Activated CD8-positive, alpha-beta T cell treated with anti-CD3 and anti-CD28 coated beads for 36 hours (primary cell): ENCODE measurements at regions of chr21 and their contacts with region 1.

Region 1: GRCh38 chr21:33894736-33895288 is 20.8 kb downstream of the ATP5PO start:
- DNase-seq: peak; percentile 88
- ATAC-seq: peak; percentile 99
- H3K4me3 Mint-ChIP-seq: peak overlapping the region; percentile 51
- H3K27ac Mint-ChIP-seq: peak overlapping the region; percentile 70
- H3K4me1 Mint-ChIP-seq: peaks cover 12% of the 10 kb centered on the region
- H3K27me3 Mint-ChIP-seq: no peaks in the 10 kb centered on the region
- CTCF ChIP-seq: peak; percentile 79

Region 2: DNA sequence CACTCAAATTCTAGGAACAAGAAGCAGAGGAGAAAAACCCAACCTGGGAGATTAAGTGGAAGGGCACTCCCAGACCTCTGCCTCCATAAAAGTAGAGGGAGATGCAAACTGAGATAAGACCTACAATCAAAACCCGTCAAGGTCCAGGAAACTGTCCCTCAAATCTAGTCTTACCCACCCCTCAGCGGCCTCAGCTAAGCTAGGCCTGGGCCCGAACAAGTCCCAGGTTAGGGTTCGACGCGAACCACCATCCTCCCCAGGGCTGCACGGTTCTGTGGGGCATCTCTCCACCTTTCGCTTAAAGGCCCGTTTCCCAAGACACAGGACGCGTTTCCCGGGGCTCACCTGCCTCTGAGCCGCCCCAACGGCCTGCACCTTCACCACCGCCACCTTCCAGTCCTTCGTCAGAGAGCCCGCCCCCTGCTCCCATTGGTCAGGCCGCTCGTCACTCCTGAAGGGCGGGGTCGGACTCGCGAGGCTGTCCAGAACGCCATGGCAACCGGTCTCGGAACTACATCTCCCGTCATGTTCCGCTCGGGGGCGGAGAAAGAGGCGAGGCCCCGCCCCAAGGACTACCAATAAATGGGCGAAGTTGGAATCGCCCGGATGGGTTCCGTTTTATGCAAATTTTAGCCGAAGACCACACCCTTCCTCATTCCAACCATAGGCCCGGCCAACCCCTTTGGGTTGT is 253.3 kb before region 1 on chr21 and contains the start of gene CRYZL1:
- CTCF ChIA-PET with region 1: no interaction called
- POLR2A ChIA-PET with region 1: no interaction called
- intact Hi-C with region 1: loop called (anchors 10 kb)
- DNase-seq: peak; percentile 100
- ATAC-seq: peak; percentile 85
- H3K4me3 Mint-ChIP-seq: peak within 1 kb of the TSS; percentile 81
- H3K27ac Mint-ChIP-seq: peak within 1 kb of the TSS; percentile 94
- H3K4me1 Mint-ChIP-seq: peaks cover 24% of the 10 kb centered on the region
- H3K27me3 Mint-ChIP-seq: peaks cover 17% of the 10 kb centered on the region
- CTCF ChIP-seq: no peak
- total RNA-seq, gene CRYZL1: 30.1 to 33.2 TPM